GM12878 (cell line): ENCODE measurements at regions of chr3 and their contacts with region 1.

Region 1: GRCh38 chr3:14921078-14921616 is 26.2 kb upstream of the NR2C2 start:
- DNase-seq: no peak
- ATAC-seq: peak; percentile 97
- H3K4me3 ChIP-seq: no peak overlapping the region
- H3K27ac ChIP-seq: no peak overlapping the region
- H3K4me1 ChIP-seq: no peaks in the 10 kb centered on the region
- H3K27me3 ChIP-seq: no peaks in the 10 kb centered on the region
- CTCF ChIP-seq: peak; percentile 97 to 99 (median 98); a peak in 5 of 6 replicates
- EP300 ChIP-seq: no peak
- POLR2A ChIP-seq: no peak
- RAD21 ChIP-seq: peak; percentile 98

Region 2: DNA sequence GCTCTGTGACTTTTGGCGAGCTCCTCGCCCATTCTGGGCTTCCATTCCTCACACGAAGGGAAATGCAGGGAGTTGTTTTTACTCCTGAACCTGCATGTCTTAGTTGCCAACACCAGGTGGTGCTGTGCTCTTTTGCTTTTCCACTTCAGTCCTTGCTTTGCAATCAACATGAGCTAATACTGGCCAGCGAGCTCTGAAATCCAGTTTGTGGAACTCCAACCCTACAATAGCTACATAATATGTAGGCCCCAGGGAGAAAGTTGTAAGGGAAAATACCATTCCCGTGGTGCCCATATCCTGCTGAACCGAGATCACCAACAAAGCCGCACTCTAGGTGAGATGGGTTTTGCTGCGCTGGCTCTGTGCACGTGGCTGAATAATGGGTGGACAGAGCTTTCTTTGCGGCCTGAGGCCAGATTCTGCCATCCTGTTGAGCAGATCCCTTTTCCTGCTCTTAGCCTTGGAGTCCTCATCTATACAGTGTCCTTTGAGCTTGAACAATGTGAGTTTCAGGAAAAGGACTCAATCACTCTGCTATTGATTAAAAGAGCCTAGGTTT is 717.5 kb before region 1 on chr3:
- CTCF ChIA-PET with region 1: interaction called, 15 read pairs
- POLR2A ChIA-PET with region 1: no interaction called
- RAD21 ChIA-PET with region 1: interaction called, 14 read pairs
- SMC1A ChIA-PET with region 1: no interaction called
- in situ Hi-C with region 1: no loop called
- intact Hi-C with region 1: loop called (anchors 5 kb)
- DNase-seq: no peak
- ATAC-seq: peak; percentile 93
- H3K4me3 ChIP-seq: no peak overlapping the region
- H3K27ac ChIP-seq: no peak overlapping the region
- H3K4me1 ChIP-seq: no peaks in the 10 kb centered on the region
- H3K27me3 ChIP-seq: no peaks in the 10 kb centered on the region
- CTCF ChIP-seq: peak; percentile 75 to 89 (median 84)
- EP300 ChIP-seq: no peak
- POLR2A ChIP-seq: no peak
- RAD21 ChIP-seq: peak; percentile 79

Region 3: GRCh38 chr3:14672588-14672987 is 248.6 kb before region 1 on chr3:
- CTCF ChIA-PET with region 1: interaction called, 8 read pairs
- POLR2A ChIA-PET with region 1: no interaction called
- RAD21 ChIA-PET with region 1: interaction called, 7 read pairs
- SMC1A ChIA-PET with region 1: interaction called, 7 read pairs
- in situ Hi-C with region 1: loop called (anchors 5 kb)
- intact Hi-C with region 1: loop called (anchors 1 kb)
- DNase-seq: no peak
- ATAC-seq: peak; percentile 71
- H3K4me3 ChIP-seq: no peak overlapping the region
- H3K27ac ChIP-seq: no peak overlapping the region
- H3K4me1 ChIP-seq: peaks cover 16% of the 10 kb centered on the region
- H3K27me3 ChIP-seq: no peaks in the 10 kb centered on the region
- CTCF ChIP-seq: no peak
- EP300 ChIP-seq: no peak
- POLR2A ChIP-seq: no peak
- RAD21 ChIP-seq: no peak

Region 4: DNA sequence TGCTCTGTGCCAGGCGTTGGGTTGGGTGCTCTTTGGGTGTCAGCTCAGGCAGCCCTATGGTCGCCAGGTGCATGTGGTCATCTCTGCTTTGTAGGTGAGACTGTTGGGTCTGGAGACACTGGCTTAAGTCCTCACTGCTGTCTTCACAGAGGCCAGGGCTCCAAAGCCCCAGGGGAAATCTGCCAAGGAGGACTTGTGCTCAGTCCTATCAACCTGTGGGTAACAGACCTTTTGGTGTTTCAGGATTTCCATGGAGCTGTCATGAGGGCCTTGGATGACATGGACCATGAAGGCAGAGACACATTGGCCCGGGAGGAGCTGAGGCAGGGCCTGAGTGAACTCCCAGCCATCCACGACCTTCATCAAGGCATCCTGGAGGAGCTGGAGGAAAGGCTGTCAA is 23.9 kb before region 1 on chr3:
- CTCF ChIA-PET with region 1: interaction called, 10 read pairs
- POLR2A ChIA-PET with region 1: no interaction called
- RAD21 ChIA-PET with region 1: no interaction called
- SMC1A ChIA-PET with region 1: no interaction called
- in situ Hi-C with region 1: no loop called
- intact Hi-C with region 1: no loop called
- DNase-seq: no peak
- ATAC-seq: no peak
- H3K4me3 ChIP-seq: no peak overlapping the region
- H3K27ac ChIP-seq: no peak overlapping the region
- H3K4me1 ChIP-seq: no peaks in the 10 kb centered on the region
- H3K27me3 ChIP-seq: no peaks in the 10 kb centered on the region; a peak in 1 of 4 replicates
- CTCF ChIP-seq: no peak
- EP300 ChIP-seq: no peak
- POLR2A ChIP-seq: no peak
- RAD21 ChIP-seq: no peak

Region 5: DNA sequence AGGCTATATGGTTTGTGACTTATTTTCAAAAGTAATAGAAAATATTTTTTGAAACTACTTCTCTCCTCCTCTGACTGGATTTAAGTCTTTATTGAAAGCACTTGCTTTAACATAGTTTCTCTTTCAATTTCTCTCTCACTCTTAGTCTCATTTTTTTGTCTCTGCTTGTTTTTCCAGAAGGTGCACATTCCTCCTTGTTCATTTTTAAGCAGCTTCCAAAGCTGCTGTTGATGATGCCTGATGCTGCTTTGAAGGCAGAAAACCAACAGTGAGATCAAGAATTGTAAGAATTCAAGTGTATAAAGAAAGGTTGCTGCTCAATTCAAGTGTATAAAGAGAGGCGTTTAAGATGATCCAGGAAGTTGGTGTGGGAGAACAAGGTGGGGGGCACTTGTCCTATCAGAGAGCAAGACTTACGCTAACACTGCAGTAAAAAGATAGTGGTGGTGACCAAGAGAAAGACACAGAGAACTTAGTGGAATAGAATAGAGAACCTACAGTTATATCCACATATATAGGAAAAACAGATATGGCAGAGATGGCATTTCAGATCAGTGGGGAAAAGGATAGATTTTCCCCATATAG is 38.3 kb after region 1 on chr3:
- CTCF ChIA-PET with region 1: no interaction called
- POLR2A ChIA-PET with region 1: no interaction called
- RAD21 ChIA-PET with region 1: no interaction called
- SMC1A ChIA-PET with region 1: no interaction called
- in situ Hi-C with region 1: no loop called
- intact Hi-C with region 1: no loop called
- DNase-seq: no peak
- ATAC-seq: peak; percentile 58
- H3K4me3 ChIP-seq: peak overlapping the region; percentile 66
- H3K27ac ChIP-seq: peak overlapping the region; percentile 77
- H3K4me1 ChIP-seq: peaks cover 22% of the 10 kb centered on the region
- H3K27me3 ChIP-seq: no peaks in the 10 kb centered on the region
- CTCF ChIP-seq: no peak
- EP300 ChIP-seq: no peak
- POLR2A ChIP-seq: no peak
- RAD21 ChIP-seq: no peak

Region 6: GRCh38 chr3:15051531-15051930 is 130.4 kb after region 1 on chr3:
- CTCF ChIA-PET with region 1: interaction called, 10 read pairs
- POLR2A ChIA-PET with region 1: interaction called, 4 read pairs
- RAD21 ChIA-PET with region 1: interaction called, 7 read pairs
- SMC1A ChIA-PET with region 1: interaction called, 11 read pairs
- in situ Hi-C with region 1: no loop called
- intact Hi-C with region 1: loop called (anchors 2 kb)
- DNase-seq: no peak
- ATAC-seq: peak; percentile 88
- H3K4me3 ChIP-seq: no peak overlapping the region
- H3K27ac ChIP-seq: peak overlapping the region; percentile 71
- H3K4me1 ChIP-seq: peaks cover 45% of the 10 kb centered on the region
- H3K27me3 ChIP-seq: no peaks in the 10 kb centered on the region
- CTCF ChIP-seq: peak; percentile 76 to 90 (median 80)
- EP300 ChIP-seq: no peak
- POLR2A ChIP-seq: peak; percentile 34; the same call in 1 of the 2 replicates
- RAD21 ChIP-seq: peak; percentile 51

Region 7: GRCh38 chr3:15205934-15206661 is 285.0 kb after region 1 on chr3 and contains the start of gene CAPN7:
- CTCF ChIA-PET with region 1: no interaction called
- POLR2A ChIA-PET with region 1: no interaction called
- RAD21 ChIA-PET with region 1: interaction called, 3 read pairs
- SMC1A ChIA-PET with region 1: no interaction called
- in situ Hi-C with region 1: no loop called
- intact Hi-C with region 1: loop called (anchors 10 kb)
- DNase-seq: peak; percentile 67
- ATAC-seq: peak; percentile 94
- H3K4me3 ChIP-seq: peak within 1 kb of the TSS; percentile 94
- H3K27ac ChIP-seq: peak within 1 kb of the TSS; percentile 61
- H3K4me1 ChIP-seq: no peaks in the 10 kb centered on the region
- H3K27me3 ChIP-seq: no peaks in the 10 kb centered on the region
- CTCF ChIP-seq: peak; percentile 39 to 40 (median 39); a peak in 4 of 6 replicates
- EP300 ChIP-seq: no peak
- POLR2A ChIP-seq: peak; percentile 95
- RAD21 ChIP-seq: no peak
- polyA plus RNA-seq, gene CAPN7: 5.3 to 6.7 TPM